Naive thymus-derived CD4-positive, alpha-beta T cell (primary cell): ENCODE measurements at regions of chr19 and their contacts with region 1.

Region 1: DNA sequence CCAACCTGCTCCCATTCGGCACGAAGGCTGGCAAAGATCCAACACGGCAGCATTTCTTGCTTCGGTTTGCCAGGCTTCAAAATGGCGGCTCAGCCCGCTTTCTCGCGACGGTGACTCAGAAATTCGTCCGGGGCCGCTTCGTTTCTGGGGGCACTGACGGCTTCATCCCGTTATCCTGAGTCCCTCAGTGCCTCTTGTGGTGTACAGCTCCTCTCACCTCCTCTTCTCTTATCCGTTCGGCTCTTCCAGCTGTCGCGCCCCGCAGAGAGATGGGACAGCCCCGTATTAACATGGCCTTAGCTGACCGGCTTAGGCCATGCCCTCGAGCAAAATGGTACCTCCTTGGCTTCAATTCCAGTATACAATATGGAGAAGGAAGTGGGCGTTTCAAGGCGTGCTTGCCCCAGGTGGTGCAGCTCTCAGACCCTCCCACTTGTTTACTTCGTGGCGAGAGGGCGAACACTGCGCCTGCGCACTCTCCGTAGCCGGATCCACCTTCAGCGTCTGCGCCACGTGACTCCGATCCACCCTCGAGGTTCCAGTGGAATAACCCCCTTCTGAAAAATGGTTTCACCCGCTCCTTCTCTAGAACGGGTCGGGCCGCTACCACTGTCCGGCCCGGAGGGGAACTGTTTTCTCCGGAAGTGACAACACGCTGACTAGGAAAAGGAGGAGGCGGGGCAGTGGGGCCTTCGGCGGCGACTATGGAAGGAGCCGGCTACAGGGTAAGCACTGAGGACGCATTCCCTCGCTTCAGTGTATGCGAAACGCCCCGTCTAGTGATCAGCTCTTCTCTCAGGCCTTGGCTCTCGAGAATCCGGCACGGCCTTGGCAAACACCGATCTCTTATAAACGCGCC is at the starts of genes AKT1S1 and TBC1D17:
- DNase-seq: peak; percentile 90 to 100 (median 99)
- ATAC-seq: peak; percentile 81
- H3K4me3 ChIP-seq: peak within 1 kb of the TSS; percentile 96
- H3K4me3 Mint-ChIP-seq: no peak within 1 kb of the TSS
- H3K27ac ChIP-seq: peak within 1 kb of the TSS; percentile 97
- H3K27ac Mint-ChIP-seq: no peak within 1 kb of the TSS
- H3K4me1 ChIP-seq: peaks cover 11 to 20% of the 10 kb centered on the region in 2 donors
- H3K4me1 Mint-ChIP-seq: peaks cover 23 to 35% (median 28%) of the 10 kb centered on the region in 7 donors
- H3K27me3 ChIP-seq: no peaks in the 10 kb centered on the region
- H3K27me3 Mint-ChIP-seq: no peaks in the 10 kb centered on the region
- total RNA-seq, gene AKT1S1: 15.9 to 25.7 (median 21.2) TPM
- total RNA-seq, gene TBC1D17: 42.9 to 106 (median 53.0) TPM

Region 2: GRCh38 chr19:48646001-48646721 is 1231.1 kb before region 1 on chr19 and contains the start of gene CA11:
- CTCF ChIA-PET with region 1: no interaction called
- POLR2A ChIA-PET with region 1: no interaction called
- intact Hi-C with region 1: loop called in 1 of 2 experiments (anchors 2 kb)
- DNase-seq: peak; percentile 89 to 97 (median 93)
- ATAC-seq: peak; percentile 94
- H3K4me3 ChIP-seq: peak within 1 kb of the TSS; percentile 94
- H3K4me3 Mint-ChIP-seq: peak within 1 kb of the TSS; percentile 86 to 99 (median 94)
- H3K27ac ChIP-seq: peak within 1 kb of the TSS; percentile 79
- H3K27ac Mint-ChIP-seq: peak within 1 kb of the TSS; percentile 87 to 98 (median 94)
- H3K4me1 ChIP-seq: peaks cover 21% of the 10 kb centered on the region in 2 donors
- H3K4me1 Mint-ChIP-seq: peaks cover 25 to 60% (median 44%) of the 10 kb centered on the region in 7 donors
- H3K27me3 ChIP-seq: no peaks in the 10 kb centered on the region
- H3K27me3 Mint-ChIP-seq: peaks cover 0 to 8% (median 0%) of the 10 kb centered on the region in 5 donors
- total RNA-seq, gene CA11: 7.5 to 20.5 (median 12.5) TPM

Region 3: GRCh38 chr19:49590071-49590970 is 286.9 kb before region 1 on chr19:
- CTCF ChIA-PET with region 1: no interaction called
- POLR2A ChIA-PET with region 1: no interaction called
- intact Hi-C with region 1: loop called (anchors 1 to 5 kb)
- DNase-seq: peak; percentile 85 to 98 (median 97)
- ATAC-seq: peak; percentile 90
- H3K4me3 ChIP-seq: peak overlapping the region; percentile 97
- H3K4me3 Mint-ChIP-seq: peak overlapping the region; percentile 85 to 95 (median 94)
- H3K27ac ChIP-seq: peak overlapping the region; percentile 86
- H3K27ac Mint-ChIP-seq: peak overlapping the region; percentile 76 to 95 (median 93)
- H3K4me1 ChIP-seq: peaks cover 15 to 18% of the 10 kb centered on the region in 2 donors
- H3K4me1 Mint-ChIP-seq: peaks cover 26 to 42% (median 31%) of the 10 kb centered on the region in 7 donors
- H3K27me3 ChIP-seq: no peaks in the 10 kb centered on the region
- H3K27me3 Mint-ChIP-seq: peaks cover 0 to 12% (median 0%) of the 10 kb centered on the region in 5 donors

Region 4: GRCh38 chr19:49712397-49712859 is 164.8 kb before region 1 on chr19:
- CTCF ChIA-PET with region 1: no interaction called
- POLR2A ChIA-PET with region 1: interaction called, 11 read pairs
- intact Hi-C with region 1: loop called in 1 of 2 experiments (anchors 1 kb)
- DNase-seq: no peak
- ATAC-seq: no peak
- H3K4me3 ChIP-seq: no peak overlapping the region
- H3K4me3 Mint-ChIP-seq: no peak overlapping the region
- H3K27ac ChIP-seq: no peak overlapping the region
- H3K27ac Mint-ChIP-seq: peak overlapping the region in 1 of 9 donors; percentile 83
- H3K4me1 ChIP-seq: peaks cover 0 to 2% of the 10 kb centered on the region in 2 donors
- H3K4me1 Mint-ChIP-seq: peaks cover 3 to 12% (median 4%) of the 10 kb centered on the region in 7 donors
- H3K27me3 ChIP-seq: no peaks in the 10 kb centered on the region
- H3K27me3 Mint-ChIP-seq: peaks cover 0 to 4% (median 0%) of the 10 kb centered on the region in 5 donors

Region 5: GRCh38 chr19:49862376-49863253 is 14.6 kb before region 1 on chr19:
- CTCF ChIA-PET with region 1: no interaction called
- POLR2A ChIA-PET with region 1: interaction called, 47 read pairs
- intact Hi-C with region 1: loop called in 1 of 2 experiments (anchors 1 kb)
- DNase-seq: no peak
- ATAC-seq: no peak
- H3K4me3 ChIP-seq: no peak overlapping the region
- H3K4me3 Mint-ChIP-seq: no peak overlapping the region
- H3K27ac ChIP-seq: no peak overlapping the region
- H3K27ac Mint-ChIP-seq: peak overlapping the region in 2 of 9 donors; percentile 54
- H3K4me1 ChIP-seq: peaks cover 11 to 12% of the 10 kb centered on the region in 2 donors
- H3K4me1 Mint-ChIP-seq: peaks cover 20 to 42% (median 27%) of the 10 kb centered on the region in 7 donors
- H3K27me3 ChIP-seq: no peaks in the 10 kb centered on the region
- H3K27me3 Mint-ChIP-seq: no peaks in the 10 kb centered on the region

Region 6: GRCh38 chr19:50025024-50025789 is 148.0 kb after region 1 on chr19 and contains the start of gene VRK3:
- CTCF ChIA-PET with region 1: no interaction called
- POLR2A ChIA-PET with region 1: interaction called, 3 read pairs
- intact Hi-C with region 1: loop called in 1 of 2 experiments (anchors 1 kb)
- DNase-seq: peak; percentile 93 to 100 (median 99)
- ATAC-seq: peak; percentile 91
- H3K4me3 ChIP-seq: peak within 1 kb of the TSS; percentile 85
- H3K4me3 Mint-ChIP-seq: peak within 1 kb of the TSS; percentile 93 to 99 (median 94)
- H3K27ac ChIP-seq: peak within 1 kb of the TSS; percentile 96
- H3K27ac Mint-ChIP-seq: peak within 1 kb of the TSS; percentile 98 to 100 (median 99)
- H3K4me1 ChIP-seq: peaks cover 19 to 29% of the 10 kb centered on the region in 2 donors
- H3K4me1 Mint-ChIP-seq: peaks cover 30 to 73% (median 58%) of the 10 kb centered on the region in 7 donors
- H3K27me3 ChIP-seq: no peaks in the 10 kb centered on the region
- H3K27me3 Mint-ChIP-seq: peaks cover 0 to 6% (median 0%) of the 10 kb centered on the region in 5 donors
- total RNA-seq, gene VRK3: 70.6 to 121 (median 84.7) TPM